ENCODE measurements at regions of chr14 and their contacts with region 1.

Region 1: DNA sequence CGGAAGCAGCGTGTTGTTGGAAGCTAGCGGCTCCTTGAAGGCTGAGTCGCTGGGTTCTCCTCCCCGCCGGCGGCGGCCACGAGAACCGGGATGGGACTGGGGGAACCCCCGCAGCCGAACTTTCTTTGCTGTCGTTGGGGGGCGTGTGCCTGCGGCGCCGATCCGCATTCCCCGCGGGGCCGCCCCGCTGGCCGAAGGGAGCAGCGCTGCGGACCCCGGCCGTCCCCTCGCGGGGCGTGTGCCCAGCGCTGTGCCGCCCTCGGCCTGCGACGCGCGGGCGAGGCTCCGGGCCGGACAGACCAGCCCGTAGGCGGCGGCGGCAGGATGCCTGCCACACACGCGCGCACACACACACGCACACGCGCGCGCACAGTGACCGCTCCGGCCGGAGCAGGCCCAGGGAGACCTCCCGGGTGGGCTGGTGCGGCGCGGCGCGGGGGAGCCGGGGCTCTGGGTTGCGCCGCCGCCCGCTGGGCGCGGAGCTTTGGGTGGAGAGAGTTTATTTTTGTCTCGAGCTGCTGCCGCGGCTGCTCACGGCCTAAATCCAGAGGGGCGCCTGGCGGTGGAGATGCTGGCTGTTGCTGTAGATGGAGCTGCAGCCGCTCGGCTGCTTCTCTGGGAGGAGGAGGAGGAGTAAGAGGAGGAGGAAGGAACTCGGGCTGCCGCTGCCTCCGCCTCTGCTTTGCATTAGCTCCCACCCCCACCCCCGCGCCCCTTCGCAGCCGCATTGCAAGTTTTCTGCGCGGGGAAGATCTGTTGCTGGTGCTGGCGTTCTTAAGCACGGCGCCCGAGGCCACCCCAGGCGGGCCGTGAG is at the start of gene SAMD4A:
- DNase-seq: peak; percentile 77
- H3K4me3 ChIP-seq: peak within 1 kb of the TSS; percentile 70 to 73
- H3K27ac ChIP-seq: peak within 1 kb of the TSS; percentile 82 to 93
- H3K4me1 ChIP-seq: peaks cover 22 to 28% of the 10 kb centered on the region in 2 experiments
- H3K27me3 ChIP-seq: no peaks in the 10 kb centered on the region
- CTCF ChIP-seq: peak; percentile 42
- EP300 ChIP-seq: no peak
- RAD21 ChIP-seq: peak; percentile 24; the same call in 1 of the 2 replicates
- polyA plus RNA-seq, gene SAMD4A: 5.0 and 5.9 TPM in 2 replicates

Region 2: DNA sequence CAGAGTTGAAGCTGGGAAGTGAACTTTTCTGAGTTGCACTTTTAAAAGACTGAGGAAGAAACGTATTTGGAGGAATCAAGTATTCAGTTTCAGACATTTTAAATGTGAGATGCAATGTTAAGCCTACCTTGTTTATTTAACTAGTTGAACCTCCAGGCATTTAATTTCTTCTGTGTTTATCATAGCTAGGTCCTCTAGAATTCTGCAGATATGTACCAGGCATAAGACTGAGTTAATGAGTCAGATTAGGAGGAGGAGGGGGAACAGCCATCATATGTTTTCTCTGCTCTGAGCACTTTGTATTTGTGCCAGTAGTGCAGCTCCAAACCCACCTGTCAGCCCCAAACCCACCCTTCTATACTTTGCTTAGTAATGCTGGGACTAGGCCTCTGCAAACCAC is 16.1 kb before region 1 on chr14:
- CTCF ChIA-PET with region 1: interaction called, 15 read pairs
- POLR2A ChIA-PET with region 1: no interaction called
- DNase-seq: no peak
- H3K4me3 ChIP-seq: no peak overlapping the region
- H3K27ac ChIP-seq: no peak overlapping the region; a peak in 1 of 4 replicates
- H3K4me1 ChIP-seq: peaks cover 0 to 6% of the 10 kb centered on the region in 2 experiments; a peak in 2 of 4 replicates
- H3K27me3 ChIP-seq: no peaks in the 10 kb centered on the region
- CTCF ChIP-seq: no peak
- EP300 ChIP-seq: no peak
- RAD21 ChIP-seq: no peak

Region 3: GRCh38 chr14:54691525-54692283 is 125.1 kb after region 1 on chr14:
- CTCF ChIA-PET with region 1: interaction called, 51 read pairs
- POLR2A ChIA-PET with region 1: interaction called, 3 read pairs
- DNase-seq: peak; percentile 62
- H3K4me3 ChIP-seq: no peak overlapping the region
- H3K27ac ChIP-seq: no peak overlapping the region
- H3K4me1 ChIP-seq: peaks cover 5 to 8% of the 10 kb centered on the region in 2 experiments; a peak in 2 of 4 replicates
- H3K27me3 ChIP-seq: no peaks in the 10 kb centered on the region
- CTCF ChIP-seq: peak; percentile 85
- EP300 ChIP-seq: no peak
- RAD21 ChIP-seq: peak; percentile 85

Region 4: GRCh38 chr14:54722781-54723432 is 156.3 kb after region 1 on chr14:
- CTCF ChIA-PET with region 1: interaction called, 24 read pairs
- POLR2A ChIA-PET with region 1: no interaction called
- DNase-seq: no peak
- H3K4me3 ChIP-seq: no peak overlapping the region
- H3K27ac ChIP-seq: no peak overlapping the region
- H3K4me1 ChIP-seq: peaks cover 2 to 8% of the 10 kb centered on the region in 2 experiments; a peak in 2 of 4 replicates
- H3K27me3 ChIP-seq: no peaks in the 10 kb centered on the region
- CTCF ChIP-seq: peak; percentile 52
- EP300 ChIP-seq: no peak
- RAD21 ChIP-seq: peak; percentile 59

Region 5: DNA sequence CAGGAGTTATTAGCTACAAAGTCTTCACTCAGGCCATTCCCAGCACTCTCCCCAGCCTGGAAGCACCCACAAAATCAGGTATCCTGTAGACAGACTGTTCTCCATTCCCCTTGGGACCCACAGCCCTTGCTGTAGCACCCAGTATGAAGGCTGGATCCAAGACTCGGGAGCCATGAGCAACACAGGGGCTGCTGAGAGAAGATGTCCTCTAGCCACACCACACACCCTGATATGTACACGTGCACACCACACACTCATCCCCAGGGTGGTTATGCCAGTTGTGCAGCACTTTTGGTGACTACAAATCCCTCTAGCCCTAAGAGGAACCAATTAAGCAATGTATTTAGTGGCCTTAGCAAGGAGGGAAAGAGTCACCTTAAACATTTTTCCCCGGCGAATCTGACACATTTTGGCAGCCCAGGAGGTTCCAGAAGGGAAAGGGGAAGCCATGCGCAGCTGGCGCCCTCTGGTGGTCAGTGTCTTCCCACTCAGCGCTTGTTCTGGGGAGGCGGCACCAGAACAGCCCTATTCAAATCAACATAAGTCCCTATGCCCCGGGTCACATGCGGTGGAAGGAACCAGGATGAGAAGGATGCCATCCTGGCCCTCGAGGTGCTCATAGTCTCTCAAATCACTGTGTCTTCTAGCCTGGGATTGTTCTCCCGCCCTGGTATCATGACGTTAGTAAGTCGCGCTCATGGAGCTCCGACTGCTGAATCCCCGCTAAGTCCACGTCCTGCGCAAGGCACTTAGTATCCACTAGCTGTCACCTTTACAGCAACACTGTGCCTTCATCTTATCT is 239.1 kb after region 1 on chr14:
- CTCF ChIA-PET with region 1: interaction called, 71 read pairs
- POLR2A ChIA-PET with region 1: interaction called, 18 read pairs
- DNase-seq: peak; percentile 80
- H3K4me3 ChIP-seq: peak overlapping the region in 1 of 2 experiments; percentile 45; a peak in 1 of 4 replicates
- H3K27ac ChIP-seq: peak overlapping the region in 1 of 2 experiments; percentile 29; a peak in 1 of 4 replicates
- H3K4me1 ChIP-seq: peaks cover 0 to 57% of the 10 kb centered on the region in 2 experiments; a peak in 2 of 4 replicates
- H3K27me3 ChIP-seq: no peaks in the 10 kb centered on the region
- CTCF ChIP-seq: peak; percentile 90
- EP300 ChIP-seq: no peak
- RAD21 ChIP-seq: peak; percentile 85